ENCODE measurements at regions of chr10 and their contacts with region 1.

Region 1: GRCh38 chr10:73879296-73880173 is 5.2 kb upstream of the CAMK2G start:
- DNase-seq: peak; percentile 97
- ATAC-seq: peak; percentile 93
- H3K4me3 ChIP-seq: no peak overlapping the region
- H3K4me3 Mint-ChIP-seq: no peak overlapping the region
- H3K27ac ChIP-seq: peak overlapping the region; percentile 2 to 39
- H3K27ac Mint-ChIP-seq: peak overlapping the region; percentile 8
- H3K4me1 ChIP-seq: peaks cover 13 to 26% of the 10 kb centered on the region in 2 donors
- H3K4me1 Mint-ChIP-seq: peaks cover 21% of the 10 kb centered on the region
- H3K27me3 ChIP-seq: no peaks in the 10 kb centered on the region
- H3K27me3 Mint-ChIP-seq: no peaks in the 10 kb centered on the region
- CTCF ChIP-seq: peak; percentile 91

Region 2: DNA sequence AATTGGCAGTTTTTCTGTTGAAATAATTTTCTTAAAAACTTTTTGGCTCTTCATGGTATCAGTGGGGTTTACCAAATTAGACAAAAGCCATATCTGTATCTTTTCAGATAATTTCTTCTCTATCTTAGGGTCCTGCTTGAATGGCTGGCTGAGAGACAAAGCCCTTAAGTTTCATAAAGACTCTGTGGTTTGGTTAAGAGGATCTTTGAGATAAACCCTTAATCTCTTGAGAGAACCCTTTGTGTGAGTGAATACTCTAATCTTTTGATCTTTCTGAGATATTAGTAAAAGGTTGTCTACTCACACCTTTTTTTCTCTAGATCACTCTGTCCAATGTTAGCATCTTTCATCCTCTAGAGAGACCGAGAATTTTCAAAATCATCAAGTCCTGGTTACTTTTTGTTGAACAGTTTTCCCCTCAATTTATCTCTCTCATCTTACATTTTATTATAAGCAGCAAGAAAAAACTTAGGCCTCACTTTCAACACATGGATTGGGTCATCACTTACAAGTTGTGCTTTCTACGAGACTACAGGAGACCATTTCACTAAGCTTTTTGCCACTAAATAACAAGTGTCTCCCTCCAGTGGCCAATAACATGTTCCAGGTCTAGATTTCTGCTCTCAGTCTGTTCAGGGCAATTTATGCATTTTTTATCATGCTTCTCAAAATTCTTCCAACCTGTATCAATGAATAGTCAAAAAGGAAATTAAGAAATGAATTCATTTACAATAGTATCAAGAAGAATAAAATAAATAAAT is 660.9 kb before region 1 on chr10:
- CTCF ChIA-PET with region 1: no interaction called
- POLR2A ChIA-PET with region 1: no interaction called
- intact Hi-C with region 1: no loop called
- DNase-seq: peak; percentile 10
- ATAC-seq: no peak
- H3K4me3 ChIP-seq: no peak overlapping the region
- H3K4me3 Mint-ChIP-seq: no peak overlapping the region
- H3K27ac ChIP-seq: no peak overlapping the region
- H3K27ac Mint-ChIP-seq: no peak overlapping the region
- H3K4me1 ChIP-seq: no peaks in the 10 kb centered on the region
- H3K4me1 Mint-ChIP-seq: peaks cover 5% of the 10 kb centered on the region
- H3K27me3 ChIP-seq: no peaks in the 10 kb centered on the region
- H3K27me3 Mint-ChIP-seq: no peaks in the 10 kb centered on the region
- CTCF ChIP-seq: peak; percentile 37

Region 3: GRCh38 chr10:73590881-73591799 is 288.4 kb before region 1 on chr10 and contains the start of gene USP54:
- CTCF ChIA-PET with region 1: no interaction called
- POLR2A ChIA-PET with region 1: no interaction called
- intact Hi-C with region 1: no loop called
- DNase-seq: peak; percentile 11
- ATAC-seq: no peak
- H3K4me3 ChIP-seq: no peak within 1 kb of the TSS
- H3K4me3 Mint-ChIP-seq: peak within 1 kb of the TSS; percentile 35
- H3K27ac ChIP-seq: peak within 1 kb of the TSS in 1 of 2 donors; percentile 10
- H3K27ac Mint-ChIP-seq: peak within 1 kb of the TSS; percentile 38
- H3K4me1 ChIP-seq: peaks cover 12 to 14% of the 10 kb centered on the region in 2 donors
- H3K4me1 Mint-ChIP-seq: peaks cover 16% of the 10 kb centered on the region
- H3K27me3 ChIP-seq: no peaks in the 10 kb centered on the region
- H3K27me3 Mint-ChIP-seq: no peaks in the 10 kb centered on the region
- CTCF ChIP-seq: no peak
- total RNA-seq, gene USP54: 12.9 and 14.3 TPM in 2 replicates

Region 4: DNA sequence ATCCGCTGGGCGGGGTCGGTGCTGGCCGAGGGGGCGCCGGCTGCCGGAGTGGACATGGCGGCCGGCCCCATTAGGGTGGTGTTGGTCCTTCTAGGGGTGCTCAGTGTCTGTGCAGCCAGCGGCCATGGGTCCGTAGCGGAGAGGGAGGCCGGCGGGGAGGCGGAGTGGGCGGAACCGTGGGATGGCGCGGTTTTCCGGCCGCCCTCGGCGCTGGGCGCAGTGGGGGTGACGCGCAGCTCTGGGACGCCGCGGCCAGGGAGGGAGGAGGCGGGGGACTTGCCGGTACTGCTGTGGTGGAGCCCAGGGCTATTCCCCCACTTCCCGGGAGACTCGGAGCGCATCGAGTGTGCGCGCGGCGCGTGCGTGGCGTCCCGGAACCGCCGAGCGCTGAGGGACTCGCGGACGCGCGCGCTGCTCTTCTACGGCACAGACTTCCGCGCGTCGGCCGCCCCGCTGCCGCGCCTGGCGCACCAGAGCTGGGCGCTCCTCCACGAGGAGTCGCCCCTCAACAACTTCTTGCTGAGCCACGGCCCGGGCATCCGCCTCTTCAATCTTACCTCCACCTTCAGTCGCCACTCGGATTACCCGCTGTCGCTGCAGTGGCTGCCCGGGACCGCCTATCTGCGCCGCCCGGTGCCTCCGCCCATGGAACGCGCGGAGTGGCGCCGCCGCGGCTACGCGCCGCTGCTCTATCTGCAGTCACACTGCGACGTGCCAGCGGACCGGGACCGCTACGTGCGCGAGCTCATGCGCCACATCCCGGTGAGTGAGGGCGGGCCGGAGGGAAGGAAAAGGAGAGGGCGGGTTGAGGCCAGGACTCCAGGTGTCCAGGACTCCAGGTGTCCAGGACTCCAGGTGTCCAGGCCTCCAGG is 107.0 kb before region 1 on chr10:
- CTCF ChIA-PET with region 1: interaction called, 10 read pairs
- POLR2A ChIA-PET with region 1: interaction called, 5 read pairs
- intact Hi-C with region 1: loop called (anchors 2 kb)
- DNase-seq: peak; percentile 91
- ATAC-seq: peak; percentile 66
- H3K4me3 ChIP-seq: peak overlapping the region; percentile 66 to 94 (median 89)
- H3K4me3 Mint-ChIP-seq: peak overlapping the region; percentile 97
- H3K27ac ChIP-seq: peak overlapping the region; percentile 85 to 93
- H3K27ac Mint-ChIP-seq: peak overlapping the region; percentile 98
- H3K4me1 ChIP-seq: peaks cover 30 to 47% of the 10 kb centered on the region in 2 donors
- H3K4me1 Mint-ChIP-seq: peaks cover 63% of the 10 kb centered on the region
- H3K27me3 ChIP-seq: no peaks in the 10 kb centered on the region
- H3K27me3 Mint-ChIP-seq: no peaks in the 10 kb centered on the region
- CTCF ChIP-seq: no peak

Region 5: GRCh38 chr10:73865459-73866442 is 13.8 kb before region 1 on chr10:
- CTCF ChIA-PET with region 1: interaction called, 102 read pairs
- POLR2A ChIA-PET with region 1: interaction called, 9 read pairs
- intact Hi-C with region 1: loop called (anchors 1 kb)
- DNase-seq: peak; percentile 84
- ATAC-seq: peak; percentile 92
- H3K4me3 ChIP-seq: peak overlapping the region; percentile 19 to 58 (median 42)
- H3K4me3 Mint-ChIP-seq: peak overlapping the region; percentile 81
- H3K27ac ChIP-seq: peak overlapping the region; percentile 68 to 81
- H3K27ac Mint-ChIP-seq: peak overlapping the region; percentile 96
- H3K4me1 ChIP-seq: peaks cover 36 to 45% of the 10 kb centered on the region in 2 donors
- H3K4me1 Mint-ChIP-seq: peaks cover 57% of the 10 kb centered on the region
- H3K27me3 ChIP-seq: no peaks in the 10 kb centered on the region
- H3K27me3 Mint-ChIP-seq: no peaks in the 10 kb centered on the region
- CTCF ChIP-seq: no peak

Region 6: DNA sequence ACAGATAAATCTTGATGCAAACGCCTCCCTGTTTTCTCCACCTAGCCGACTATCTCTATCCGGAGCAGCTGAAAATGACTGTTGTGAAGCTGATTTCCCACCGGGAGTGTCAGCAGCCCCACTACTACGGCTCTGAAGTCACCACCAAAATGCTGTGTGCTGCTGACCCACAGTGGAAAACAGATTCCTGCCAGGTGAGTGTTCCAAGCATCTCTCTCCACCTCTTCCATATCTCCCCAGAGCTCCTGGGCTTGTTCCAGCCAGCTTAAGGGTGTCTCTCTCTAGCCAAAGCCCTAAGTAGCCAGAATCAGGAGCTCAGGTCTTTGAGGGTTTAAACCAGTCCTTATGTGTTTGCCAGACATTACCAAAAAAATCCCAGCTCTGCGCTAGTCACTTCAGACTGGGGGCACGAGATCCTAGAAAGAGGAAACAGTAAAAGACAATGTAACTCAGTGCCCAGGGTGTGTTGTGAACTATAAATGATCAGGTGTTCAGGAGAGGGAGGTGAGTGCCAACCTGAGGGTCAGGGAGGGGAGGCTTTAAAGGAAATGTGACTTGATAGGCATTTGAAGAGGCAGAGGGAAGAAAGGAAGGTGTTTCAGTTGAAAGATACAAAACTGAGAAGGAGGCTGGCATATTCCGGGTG is 35.8 kb after region 1 on chr10:
- CTCF ChIA-PET with region 1: no interaction called
- POLR2A ChIA-PET with region 1: no interaction called
- intact Hi-C with region 1: no loop called
- DNase-seq: no peak
- ATAC-seq: no peak
- H3K4me3 ChIP-seq: no peak overlapping the region
- H3K4me3 Mint-ChIP-seq: no peak overlapping the region
- H3K27ac ChIP-seq: no peak overlapping the region
- H3K27ac Mint-ChIP-seq: no peak overlapping the region
- H3K4me1 ChIP-seq: peaks cover 19 to 26% of the 10 kb centered on the region in 2 donors
- H3K4me1 Mint-ChIP-seq: peaks cover 24% of the 10 kb centered on the region
- H3K27me3 ChIP-seq: peaks cover 0 to 16% (median 4%) of the 10 kb centered on the region in 4 experiments
- H3K27me3 Mint-ChIP-seq: peaks cover 12% of the 10 kb centered on the region
- CTCF ChIP-seq: no peak

Region 7: DNA sequence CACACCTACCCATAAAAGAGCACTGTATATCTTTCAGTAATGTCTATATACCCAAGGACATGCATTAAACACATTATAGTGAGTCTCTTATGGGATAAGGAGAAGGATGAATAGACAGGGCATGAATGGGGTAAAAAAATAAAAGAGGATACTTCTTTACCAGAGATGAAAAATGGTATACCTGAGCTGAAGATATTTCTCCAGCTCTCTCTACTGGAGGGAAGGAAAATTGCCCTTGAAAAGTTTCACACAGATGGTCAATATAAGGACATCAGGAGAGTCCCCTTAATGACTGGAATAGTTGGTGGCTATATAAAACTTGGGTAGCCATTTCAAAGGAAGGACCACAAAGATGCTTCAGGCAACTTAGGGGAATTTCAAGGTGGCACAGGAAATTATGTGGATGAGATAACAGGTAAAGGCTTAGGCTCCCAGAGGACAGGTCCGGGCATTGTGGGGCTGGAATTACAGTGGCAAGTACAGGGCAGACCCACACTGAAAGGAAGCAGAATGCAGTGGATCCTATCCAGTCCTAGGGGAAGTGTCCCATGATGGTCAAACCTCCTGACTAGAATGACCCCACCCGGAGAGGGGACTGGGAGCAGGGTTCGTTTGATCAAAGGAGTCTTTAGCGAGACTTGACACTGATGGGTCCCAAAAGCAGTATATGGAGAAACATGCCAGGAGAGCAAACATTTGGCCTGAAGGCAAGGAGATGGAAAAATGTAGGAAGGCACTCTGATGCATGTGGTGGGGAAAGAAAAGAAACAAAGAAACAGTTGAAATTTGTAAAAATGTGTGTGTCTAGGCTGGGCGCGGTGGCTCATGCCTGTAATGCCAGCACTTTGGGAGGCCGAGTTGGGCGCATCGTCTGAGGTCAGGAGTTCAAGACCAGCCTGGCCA is 67.0 kb after region 1 on chr10:
- CTCF ChIA-PET with region 1: interaction called, 261 read pairs
- POLR2A ChIA-PET with region 1: interaction called, 3 read pairs
- intact Hi-C with region 1: loop called (anchors 2 kb)
- DNase-seq: no peak
- ATAC-seq: no peak
- H3K4me3 ChIP-seq: no peak overlapping the region
- H3K4me3 Mint-ChIP-seq: no peak overlapping the region
- H3K27ac ChIP-seq: no peak overlapping the region
- H3K27ac Mint-ChIP-seq: no peak overlapping the region
- H3K4me1 ChIP-seq: no peaks in the 10 kb centered on the region
- H3K4me1 Mint-ChIP-seq: no peaks in the 10 kb centered on the region
- H3K27me3 ChIP-seq: no peaks in the 10 kb centered on the region
- H3K27me3 Mint-ChIP-seq: peaks cover 4% of the 10 kb centered on the region
- CTCF ChIP-seq: no peak

Region 8: GRCh38 chr10:74072503-74072902 is 193.0 kb after region 1 on chr10:
- CTCF ChIA-PET with region 1: interaction called, 16 read pairs
- POLR2A ChIA-PET with region 1: no interaction called
- intact Hi-C with region 1: no loop called
- DNase-seq: no peak
- ATAC-seq: no peak
- H3K4me3 ChIP-seq: no peak overlapping the region
- H3K4me3 Mint-ChIP-seq: no peak overlapping the region
- H3K27ac ChIP-seq: no peak overlapping the region
- H3K27ac Mint-ChIP-seq: no peak overlapping the region
- H3K4me1 ChIP-seq: peaks cover 5 to 6% of the 10 kb centered on the region in 2 donors
- H3K4me1 Mint-ChIP-seq: peaks cover 14% of the 10 kb centered on the region
- H3K27me3 ChIP-seq: no peaks in the 10 kb centered on the region
- H3K27me3 Mint-ChIP-seq: no peaks in the 10 kb centered on the region
- CTCF ChIP-seq: no peak

Region 9: GRCh38 chr10:75235375-75236177 is 1356.0 kb after region 1 on chr10 and contains the start of gene COMTD1:
- CTCF ChIA-PET with region 1: interaction called, 4 read pairs
- POLR2A ChIA-PET with region 1: no interaction called
- intact Hi-C with region 1: loop called (anchors 10 kb)
- DNase-seq: peak; percentile 94
- ATAC-seq: peak; percentile 70
- H3K4me3 ChIP-seq: peak within 1 kb of the TSS; percentile 17 to 80 (median 71)
- H3K4me3 Mint-ChIP-seq: peak within 1 kb of the TSS; percentile 85
- H3K27ac ChIP-seq: peak within 1 kb of the TSS; percentile 2 to 57
- H3K27ac Mint-ChIP-seq: peak within 1 kb of the TSS; percentile 74
- H3K4me1 ChIP-seq: peaks cover 4 to 20% of the 10 kb centered on the region in 2 donors
- H3K4me1 Mint-ChIP-seq: peaks cover 18% of the 10 kb centered on the region
- H3K27me3 ChIP-seq: no peaks in the 10 kb centered on the region
- H3K27me3 Mint-ChIP-seq: no peaks in the 10 kb centered on the region
- CTCF ChIP-seq: peak; percentile 100
- total RNA-seq, gene COMTD1: 12.3 and 14.5 TPM in 2 replicates